ENCODE measurements at regions of chr5 and their contacts with region 1.

Region 1: GRCh38 chr5:171907725-171908343 is 98.6 kb downstream of the FBXW11 start:
- DNase-seq: peak; percentile 14
- H3K4me3 ChIP-seq: no peak overlapping the region
- CTCF ChIP-seq: peak; percentile 61

Region 2: DNA sequence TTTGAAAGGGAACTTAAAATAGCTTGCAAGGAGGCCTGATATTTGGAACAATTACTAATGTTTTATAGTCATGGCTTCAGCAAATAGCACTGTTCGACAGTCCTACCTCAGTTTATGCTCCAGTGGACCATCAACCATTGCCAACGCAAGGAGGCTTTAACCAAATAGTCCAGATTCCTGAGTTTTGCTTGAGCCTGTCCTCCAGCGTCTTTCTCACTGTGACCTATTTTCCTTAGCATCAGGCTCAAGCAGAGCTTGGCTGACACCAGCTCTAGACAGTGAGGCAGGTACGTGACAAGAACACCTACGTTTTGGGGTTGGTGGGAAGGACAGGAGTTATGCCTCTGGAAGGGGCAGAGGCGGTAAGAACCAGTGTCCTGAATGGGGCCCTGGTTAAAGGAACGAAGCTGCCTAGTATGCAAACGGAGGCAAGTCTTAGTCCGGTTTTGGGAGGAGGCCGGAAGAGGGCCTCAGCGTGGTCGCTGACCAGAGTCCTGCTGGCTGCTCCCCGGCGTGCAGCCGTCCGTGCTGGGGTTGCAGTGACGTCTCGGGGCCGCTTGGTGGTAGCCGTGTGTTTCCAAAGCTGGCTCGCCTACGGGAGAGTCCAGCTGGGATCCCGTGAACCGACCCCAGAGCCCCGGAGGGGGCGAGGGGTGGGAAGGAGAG is 489.4 kb before region 1 on chr5:
- CTCF ChIA-PET with region 1: interaction called, 153 read pairs
- POLR2A ChIA-PET with region 1: interaction called, 3 read pairs
- DNase-seq: peak; percentile 16
- H3K4me3 ChIP-seq: peak overlapping the region; percentile 48
- CTCF ChIP-seq: peak; percentile 97

Region 3: GRCh38 chr5:171630027-171630669 is 277.7 kb before region 1 on chr5:
- CTCF ChIA-PET with region 1: interaction called, 112 read pairs
- POLR2A ChIA-PET with region 1: no interaction called
- DNase-seq: no peak
- H3K4me3 ChIP-seq: peak overlapping the region; percentile 20; the same call in 1 of the 2 replicates
- CTCF ChIP-seq: peak; percentile 76

Region 4: DNA sequence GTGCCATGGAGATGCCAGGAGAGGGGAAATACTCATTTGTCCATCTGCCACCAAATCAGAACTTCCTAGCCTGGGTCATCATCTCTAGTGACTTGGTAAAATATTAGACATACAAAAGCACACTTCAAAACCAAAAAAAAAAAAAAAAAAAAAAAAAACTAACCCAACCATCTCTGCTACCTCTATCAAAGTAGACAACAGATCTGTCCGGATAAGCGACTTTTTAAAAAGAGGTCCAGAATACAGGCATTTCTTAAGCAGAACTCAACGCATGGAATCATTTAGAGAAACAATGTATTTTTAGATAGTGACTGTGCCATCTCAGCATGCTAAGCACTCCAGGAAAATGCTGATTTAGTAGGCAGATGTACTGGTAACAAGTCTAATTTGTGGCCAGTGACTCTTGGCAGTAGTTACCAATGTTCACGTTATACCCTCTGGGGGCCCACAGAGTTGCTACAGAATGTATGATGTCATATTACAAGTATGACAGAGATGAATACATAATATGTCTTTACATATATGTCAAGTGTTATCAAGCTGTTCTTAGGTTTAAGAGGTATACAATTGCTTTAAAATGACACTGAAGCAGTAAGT is 14.4 kb before region 1 on chr5:
- CTCF ChIA-PET with region 1: interaction called, 64 read pairs
- POLR2A ChIA-PET with region 1: no interaction called
- DNase-seq: peak; percentile 86
- H3K4me3 ChIP-seq: no peak overlapping the region
- CTCF ChIP-seq: no peak

Region 5: GRCh38 chr5:172006321-172007174 is 98.7 kb after region 1 on chr5 and contains the start of gene FBXW11:
- CTCF ChIA-PET with region 1: interaction called, 117 read pairs
- POLR2A ChIA-PET with region 1: no interaction called
- DNase-seq: peak; percentile 78
- H3K4me3 ChIP-seq: peak within 1 kb of the TSS; percentile 87
- CTCF ChIP-seq: no peak

Region 6: DNA sequence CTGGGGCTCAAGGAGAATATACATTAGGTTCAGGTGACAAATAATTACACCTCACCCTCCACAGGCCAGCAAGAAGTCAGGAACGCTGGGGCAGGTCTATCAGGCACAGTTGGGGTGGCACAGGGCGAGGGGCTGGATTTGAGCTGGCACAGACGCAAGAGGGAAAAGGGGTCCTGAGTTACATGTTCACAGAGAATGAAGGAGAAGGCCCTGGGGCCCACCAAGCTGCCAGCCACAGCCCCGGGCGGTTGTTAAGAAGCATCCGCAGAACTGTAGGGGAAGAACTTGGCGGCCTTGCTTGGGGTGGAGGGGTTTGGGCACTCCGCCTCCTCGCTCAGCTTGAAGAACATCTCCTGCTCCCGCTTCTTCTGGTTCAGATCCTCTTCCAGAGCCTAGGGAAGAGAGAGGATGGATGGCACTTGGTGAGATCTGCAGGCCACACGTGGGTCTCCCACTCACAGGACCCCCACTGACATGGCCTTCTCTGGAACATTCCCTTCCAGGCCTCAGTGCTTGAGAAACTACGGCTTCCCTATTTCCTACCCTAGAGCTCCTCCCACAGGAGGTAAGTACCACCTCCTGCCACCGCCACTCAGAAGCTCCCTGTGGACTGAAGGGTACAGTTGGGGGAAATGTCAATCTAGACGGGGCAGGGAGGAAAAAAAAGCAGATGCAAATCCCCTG is 136.9 kb after region 1 on chr5:
- CTCF ChIA-PET with region 1: interaction called, 194 read pairs
- POLR2A ChIA-PET with region 1: no interaction called
- DNase-seq: no peak
- H3K4me3 ChIP-seq: no peak overlapping the region
- CTCF ChIP-seq: no peak

Region 7: GRCh38 chr5:172059661-172060100 is 151.8 kb after region 1 on chr5:
- CTCF ChIA-PET with region 1: interaction called, 194 read pairs
- POLR2A ChIA-PET with region 1: no interaction called
- DNase-seq: no peak
- H3K4me3 ChIP-seq: no peak overlapping the region
- CTCF ChIP-seq: peak; percentile 29